T-cell (primary cell): ENCODE measurements at regions of chr4 and their contacts with region 1.

Region 1: DNA sequence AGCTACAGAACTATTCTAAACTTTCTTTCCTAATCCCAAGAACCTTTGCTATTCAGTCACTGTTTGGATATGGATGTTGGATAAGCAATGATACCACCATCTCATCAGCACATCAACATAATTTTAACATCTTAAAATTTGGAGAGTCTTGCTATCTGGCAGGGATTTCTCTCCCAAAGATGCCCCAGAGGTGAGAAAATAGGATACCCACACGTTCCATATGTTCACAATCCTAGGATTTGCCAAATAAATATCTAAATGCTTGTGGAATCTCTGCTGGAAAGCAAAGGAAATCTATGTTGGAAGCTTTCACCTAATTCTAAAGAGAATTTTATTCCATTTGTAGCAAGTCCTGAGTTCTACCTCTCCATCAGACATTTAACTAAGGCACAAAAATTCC is 24.4 kb downstream of the SOWAHB start:
- DNase-seq: no peak
- ATAC-seq: no peak
- H3K4me3 ChIP-seq: no peak overlapping the region
- H3K4me3 Mint-ChIP-seq: no peak overlapping the region
- H3K27ac ChIP-seq: no peak overlapping the region
- H3K27ac Mint-ChIP-seq: no peak overlapping the region
- H3K4me1 ChIP-seq: no peaks in the 10 kb centered on the region
- H3K4me1 Mint-ChIP-seq: peaks cover 0 to 8% (median 6%) of the 10 kb centered on the region in 3 donors
- H3K27me3 ChIP-seq: no peaks in the 10 kb centered on the region
- H3K27me3 Mint-ChIP-seq: peaks cover 8 to 13% of the 10 kb centered on the region in 2 donors

Region 2: GRCh38 chr4:76326515-76326914 is 547.0 kb before region 1 on chr4:
- CTCF ChIA-PET with region 1: no interaction called
- POLR2A ChIA-PET with region 1: no interaction called
- DNase-seq: no peak
- ATAC-seq: no peak
- H3K4me3 ChIP-seq: no peak overlapping the region
- H3K4me3 Mint-ChIP-seq: no peak overlapping the region
- H3K27ac ChIP-seq: no peak overlapping the region
- H3K27ac Mint-ChIP-seq: no peak overlapping the region
- H3K4me1 ChIP-seq: no peaks in the 10 kb centered on the region
- H3K4me1 Mint-ChIP-seq: no peaks in the 10 kb centered on the region
- H3K27me3 ChIP-seq: peaks cover 0 to 2% of the 10 kb centered on the region in 2 experiments
- H3K27me3 Mint-ChIP-seq: peaks cover 1 to 7% of the 10 kb centered on the region in 2 donors

Region 3: GRCh38 chr4:77376788-77377460 is 503.4 kb after region 1 on chr4:
- CTCF ChIA-PET with region 1: no interaction called
- POLR2A ChIA-PET with region 1: interaction called in 1 of 2 experiments, 17 read pairs
- DNase-seq: no peak
- ATAC-seq: no peak
- H3K4me3 ChIP-seq: no peak overlapping the region
- H3K4me3 Mint-ChIP-seq: no peak overlapping the region
- H3K27ac ChIP-seq: no peak overlapping the region
- H3K27ac Mint-ChIP-seq: no peak overlapping the region
- H3K4me1 ChIP-seq: no peaks in the 10 kb centered on the region
- H3K4me1 Mint-ChIP-seq: no peaks in the 10 kb centered on the region
- H3K27me3 ChIP-seq: peaks cover 0 to 6% of the 10 kb centered on the region in 2 experiments
- H3K27me3 Mint-ChIP-seq: peaks cover 5% of the 10 kb centered on the region in 2 donors

Region 4: GRCh38 chr4:78520808-78521226 is 1647.3 kb after region 1 on chr4:
- CTCF ChIA-PET with region 1: no interaction called
- POLR2A ChIA-PET with region 1: no interaction called
- DNase-seq: no peak
- ATAC-seq: no peak
- H3K4me3 ChIP-seq: no peak overlapping the region
- H3K4me3 Mint-ChIP-seq: no peak overlapping the region
- H3K27ac ChIP-seq: no peak overlapping the region
- H3K27ac Mint-ChIP-seq: no peak overlapping the region
- H3K4me1 ChIP-seq: no peaks in the 10 kb centered on the region
- H3K4me1 Mint-ChIP-seq: no peaks in the 10 kb centered on the region
- H3K27me3 ChIP-seq: no peaks in the 10 kb centered on the region
- H3K27me3 Mint-ChIP-seq: peaks cover 3 to 5% of the 10 kb centered on the region in 2 donors